Activated CD4-positive, alpha-beta T cell treated with anti-CD3 and anti-CD28 coated beads for 36 hours (primary cell): ENCODE measurements at regions of chr7 and their contacts with region 1.

Region 1: DNA sequence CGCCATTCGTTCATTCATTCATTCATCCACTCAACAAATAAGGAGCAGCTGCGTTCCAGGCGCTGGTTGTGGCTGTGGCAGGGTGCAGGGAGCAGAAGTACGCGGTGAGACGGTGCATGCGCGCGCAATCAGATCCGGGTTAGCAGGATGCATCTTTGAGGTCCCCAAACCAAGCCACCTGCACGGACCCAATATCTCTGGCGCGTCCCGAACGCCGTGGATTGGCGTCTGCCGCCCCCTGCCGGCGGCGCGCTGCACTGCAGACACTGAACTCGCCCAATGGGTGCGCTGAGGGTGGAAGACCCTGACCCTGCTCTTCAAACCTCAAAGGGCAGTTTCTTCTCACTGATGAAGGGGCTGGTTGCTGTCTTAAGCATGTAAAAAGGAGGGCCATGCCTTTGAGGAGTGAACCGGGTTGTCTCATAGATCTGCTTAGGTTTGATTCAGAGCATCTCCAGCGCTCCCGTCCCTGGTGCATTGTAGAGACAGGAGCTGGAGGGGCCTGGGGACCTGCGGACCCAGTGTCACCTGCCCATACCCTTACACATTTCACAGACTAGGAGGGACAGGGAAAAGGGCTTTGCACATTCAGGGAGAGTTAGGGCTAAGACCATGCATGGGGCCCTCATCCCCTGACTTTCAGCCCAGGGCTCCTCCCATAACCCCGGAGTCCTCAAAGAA is 102.5 kb downstream of the RAMP3 start:
- DNase-seq: peak; percentile 84
- ATAC-seq: peak; percentile 88
- H3K4me3 Mint-ChIP-seq: no peak overlapping the region
- H3K27ac Mint-ChIP-seq: no peak overlapping the region
- H3K4me1 Mint-ChIP-seq: no peaks in the 10 kb centered on the region
- H3K27me3 Mint-ChIP-seq: peaks cover 9% of the 10 kb centered on the region

Region 2: DNA sequence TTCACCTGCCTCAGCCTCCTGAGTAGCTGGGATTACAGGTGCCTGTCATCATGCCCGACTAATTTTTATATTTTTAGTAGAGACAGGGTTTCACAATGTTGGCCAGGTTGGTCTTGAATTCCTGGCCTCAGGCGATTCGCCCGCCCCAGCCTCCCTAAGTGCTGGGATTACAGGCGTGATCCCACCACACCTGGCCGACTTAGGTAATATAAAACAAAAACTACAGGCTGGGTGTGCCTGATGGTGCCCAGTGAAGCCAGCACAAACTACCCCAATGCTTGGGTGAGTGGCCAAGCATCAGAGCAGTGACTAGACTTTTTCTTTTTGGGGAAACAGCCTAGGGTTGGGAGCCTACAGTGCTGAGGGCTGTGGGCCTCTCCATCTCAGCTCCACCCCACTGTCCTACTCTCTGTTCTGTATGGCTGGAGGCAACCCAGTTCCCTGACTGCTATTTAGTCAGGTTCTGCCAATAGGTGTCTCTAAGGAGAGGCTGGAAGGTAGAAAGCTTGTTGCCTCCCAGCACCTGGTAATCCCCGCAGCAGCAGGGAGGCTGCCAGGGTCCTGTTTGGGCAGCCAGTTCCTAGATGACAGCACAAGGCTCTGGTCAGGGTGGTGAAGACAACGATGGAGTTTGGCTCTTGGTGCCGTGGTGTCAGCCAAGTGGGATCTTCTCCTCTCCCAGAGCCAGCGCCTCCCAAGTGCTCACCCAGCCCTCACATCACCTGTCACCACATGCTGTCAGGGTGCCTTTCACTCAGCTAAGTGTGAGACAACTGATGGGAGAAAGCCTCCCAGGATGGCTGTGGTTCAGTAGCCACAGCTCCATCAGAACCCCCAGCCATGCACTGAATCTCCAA is 160.9 kb before region 1 on chr7:
- CTCF ChIA-PET with region 1: no interaction called
- POLR2A ChIA-PET with region 1: no interaction called
- intact Hi-C with region 1: no loop called
- DNase-seq: peak; percentile 3
- ATAC-seq: peak; percentile 49
- H3K4me3 Mint-ChIP-seq: no peak overlapping the region
- H3K27ac Mint-ChIP-seq: no peak overlapping the region
- H3K4me1 Mint-ChIP-seq: no peaks in the 10 kb centered on the region
- H3K27me3 Mint-ChIP-seq: no peaks in the 10 kb centered on the region

Region 3: GRCh38 chr7:45157653-45158401 is 102.3 kb before region 1 on chr7 and contains the start of gene RAMP3:
- CTCF ChIA-PET with region 1: interaction called, 70 read pairs
- POLR2A ChIA-PET with region 1: no interaction called
- intact Hi-C with region 1: loop called (anchors 1 kb)
- DNase-seq: no peak
- ATAC-seq: no peak
- H3K4me3 Mint-ChIP-seq: no peak within 1 kb of the TSS
- H3K27ac Mint-ChIP-seq: no peak within 1 kb of the TSS
- H3K4me1 Mint-ChIP-seq: no peaks in the 10 kb centered on the region
- H3K27me3 Mint-ChIP-seq: peaks cover 16% of the 10 kb centered on the region
- total RNA-seq, gene RAMP3: not detected

Region 4: DNA sequence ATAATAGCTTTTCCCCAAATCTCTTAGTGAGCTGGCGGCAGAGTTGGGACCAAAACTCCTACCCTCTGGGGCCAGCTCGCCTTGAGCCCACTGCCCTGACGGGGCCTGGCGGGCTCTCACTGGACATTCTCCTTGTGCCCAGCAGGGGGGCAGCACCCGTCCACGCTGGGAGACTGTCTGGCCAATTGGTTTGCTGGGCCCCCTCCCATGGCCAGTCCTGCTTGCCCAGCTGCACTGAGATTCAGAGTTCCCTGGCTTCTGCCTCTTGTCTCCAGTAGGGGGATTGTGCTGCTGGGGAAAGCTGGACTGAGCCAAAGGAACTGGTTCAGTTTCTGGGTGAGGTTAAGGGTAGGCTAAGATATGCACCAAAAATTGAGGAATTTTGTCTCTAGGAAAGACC is 42.7 kb before region 1 on chr7:
- CTCF ChIA-PET with region 1: interaction called, 11 read pairs
- POLR2A ChIA-PET with region 1: no interaction called
- intact Hi-C with region 1: no loop called
- DNase-seq: no peak
- ATAC-seq: no peak
- H3K4me3 Mint-ChIP-seq: no peak overlapping the region
- H3K27ac Mint-ChIP-seq: no peak overlapping the region
- H3K4me1 Mint-ChIP-seq: no peaks in the 10 kb centered on the region
- H3K27me3 Mint-ChIP-seq: peaks cover 14% of the 10 kb centered on the region

Region 5: GRCh38 chr7:45402480-45403218 is 142.5 kb after region 1 on chr7:
- CTCF ChIA-PET with region 1: no interaction called
- POLR2A ChIA-PET with region 1: no interaction called
- intact Hi-C with region 1: no loop called
- DNase-seq: no peak
- ATAC-seq: peak; percentile 73
- H3K4me3 Mint-ChIP-seq: no peak overlapping the region
- H3K27ac Mint-ChIP-seq: no peak overlapping the region
- H3K4me1 Mint-ChIP-seq: peaks cover 6% of the 10 kb centered on the region
- H3K27me3 Mint-ChIP-seq: peaks cover 17% of the 10 kb centered on the region

Region 6: DNA sequence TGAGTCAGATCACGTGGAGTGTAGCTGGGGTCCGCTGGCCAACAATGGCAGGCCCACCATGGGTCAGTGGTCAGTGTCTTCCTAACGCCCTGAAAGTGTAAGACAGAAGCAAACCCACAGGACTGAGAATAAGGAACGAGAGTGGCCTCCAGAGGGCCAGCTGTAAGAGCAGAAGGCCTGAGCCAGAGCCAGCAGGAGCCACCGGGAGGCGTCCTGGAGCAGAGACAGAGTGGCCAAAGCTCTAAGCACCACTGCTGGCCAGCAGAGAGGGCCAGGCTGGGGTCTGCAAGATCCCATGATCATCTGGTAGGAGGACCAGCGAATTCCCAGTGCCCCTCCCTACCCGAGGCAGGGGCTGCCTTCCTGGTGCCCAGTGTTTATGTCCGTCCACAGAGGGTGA is 603.6 kb after region 1 on chr7:
- CTCF ChIA-PET with region 1: no interaction called
- POLR2A ChIA-PET with region 1: no interaction called
- intact Hi-C with region 1: loop called in 1 of 2 experiments (anchors 10 kb)
- DNase-seq: no peak
- ATAC-seq: no peak
- H3K4me3 Mint-ChIP-seq: no peak overlapping the region
- H3K27ac Mint-ChIP-seq: no peak overlapping the region
- H3K4me1 Mint-ChIP-seq: no peaks in the 10 kb centered on the region
- H3K27me3 Mint-ChIP-seq: peaks cover 23% of the 10 kb centered on the region